AG04449 (cell line): ENCODE measurements at regions of chr19 and their contacts with region 1.

Region 1: DNA sequence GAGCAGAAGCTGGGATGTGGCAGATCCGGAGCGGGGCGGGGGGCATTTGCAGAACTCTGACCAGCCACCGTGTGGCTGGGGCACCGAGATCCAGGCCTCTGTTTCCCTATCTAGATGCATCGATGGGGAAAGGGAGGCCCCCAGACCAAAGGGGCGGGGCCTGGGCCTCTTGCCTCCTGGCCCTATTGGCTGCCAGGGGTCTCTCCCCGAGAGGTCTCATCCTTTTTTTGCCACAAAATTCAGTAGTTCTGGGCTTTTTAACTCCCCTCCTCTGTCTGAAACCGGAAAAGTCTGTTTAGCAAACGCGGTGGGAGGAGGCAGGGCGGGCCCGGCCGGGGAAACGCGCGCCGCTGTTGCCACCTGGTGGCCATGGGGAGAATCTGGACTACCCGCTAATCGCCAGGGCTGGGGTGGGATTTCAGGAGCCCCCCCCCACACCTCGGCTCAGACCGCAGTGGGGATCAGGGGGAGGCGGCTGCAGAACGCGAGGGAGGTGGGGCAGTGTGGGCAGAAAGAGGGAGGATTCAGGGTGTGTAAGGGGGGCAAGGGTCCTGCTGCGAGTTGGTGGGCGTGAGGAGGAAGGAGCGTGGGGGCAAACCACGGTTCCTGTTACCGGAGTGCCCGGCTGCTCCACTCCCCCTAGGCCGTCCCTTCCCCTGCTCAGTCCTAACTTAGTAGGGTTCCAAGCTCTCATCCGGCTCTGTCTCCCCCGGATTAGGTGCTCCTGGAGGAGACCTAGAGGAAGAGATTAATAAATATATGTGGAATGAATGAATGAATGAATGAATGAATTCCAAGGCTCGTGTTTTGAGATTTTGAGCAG is 28.3 kb downstream of the IL12RB1 start:
- DNase-seq: no peak
- H3K4me3 ChIP-seq: peak overlapping the region; percentile 30
- CTCF ChIP-seq: peak; percentile 93

Region 2: DNA sequence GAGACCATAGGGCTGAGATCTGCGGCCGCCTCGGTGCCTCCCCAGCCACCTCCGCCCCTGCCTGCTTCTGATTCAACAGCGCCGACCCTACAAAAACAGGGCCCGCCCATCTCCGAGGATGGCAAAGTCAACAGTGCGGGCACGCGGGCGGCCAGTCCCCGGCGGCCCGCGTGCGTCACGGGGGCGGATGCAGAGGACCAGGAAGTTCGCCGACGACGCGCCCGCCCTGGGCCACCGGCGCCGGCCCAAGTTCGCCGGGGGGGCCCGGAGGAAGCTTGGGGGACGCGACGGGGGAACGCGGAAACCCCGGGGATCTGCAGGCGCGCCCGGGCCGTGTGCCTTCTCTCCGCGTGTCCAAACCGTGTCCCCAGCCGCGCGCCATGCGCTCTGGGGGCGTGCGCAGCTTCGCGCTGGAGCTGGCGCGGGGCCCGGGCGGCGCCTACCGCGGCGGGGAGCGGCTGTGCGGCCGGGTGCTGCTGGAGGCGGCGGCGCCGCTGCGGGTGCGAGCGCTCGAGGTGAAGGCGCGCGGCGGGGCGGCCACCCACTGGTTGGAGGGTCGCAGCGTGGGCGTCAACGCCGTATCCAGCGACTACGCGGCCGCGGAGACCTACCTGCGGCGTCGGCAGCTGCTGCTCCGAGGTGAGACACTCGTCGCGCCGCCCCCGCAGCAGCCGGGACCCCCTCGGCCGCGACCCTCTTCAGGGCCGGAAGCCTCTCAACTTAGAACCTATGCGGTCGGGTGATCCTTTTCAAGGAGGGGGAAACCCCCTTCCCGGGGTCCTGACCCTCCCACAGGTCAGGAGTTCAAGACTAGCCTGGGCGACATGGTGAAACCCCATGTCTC is 57.3 kb before region 1 on chr19:
- CTCF ChIA-PET with region 1: interaction called, 229 read pairs
- POLR2A ChIA-PET with region 1: no interaction called
- DNase-seq: no peak
- H3K4me3 ChIP-seq: peak overlapping the region; percentile 69
- CTCF ChIP-seq: no peak

Region 3: GRCh38 chr19:18021121-18021755 is 37.2 kb before region 1 on chr19:
- CTCF ChIA-PET with region 1: interaction called, 17 read pairs
- POLR2A ChIA-PET with region 1: no interaction called
- DNase-seq: no peak
- H3K4me3 ChIP-seq: no peak overlapping the region
- CTCF ChIP-seq: no peak

Region 4: DNA sequence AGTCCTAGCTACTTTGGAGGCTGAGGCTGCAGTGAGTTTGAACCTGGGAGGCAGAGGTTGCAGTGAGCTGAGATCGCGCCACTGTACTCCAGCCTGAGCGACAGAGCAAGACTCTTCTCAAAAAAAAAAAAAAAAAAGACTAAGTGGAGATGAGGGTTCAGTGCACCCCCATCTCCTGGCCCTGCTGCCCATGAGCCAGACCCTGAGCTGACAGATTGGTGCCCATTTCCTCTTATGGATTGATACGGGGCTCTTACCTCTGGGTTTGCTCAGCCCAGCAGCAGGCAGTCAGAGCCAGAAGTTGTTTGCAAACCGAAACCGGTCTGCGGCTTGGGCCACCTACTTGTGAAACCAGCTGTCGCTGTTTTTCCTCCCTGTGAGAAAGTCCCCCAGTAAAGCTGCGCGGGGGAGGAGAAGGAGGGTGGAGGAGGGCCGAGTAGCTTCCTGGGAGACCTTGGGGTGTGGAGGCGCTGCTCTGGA is 13.6 kb before region 1 on chr19:
- CTCF ChIA-PET with region 1: interaction called, 12 read pairs
- POLR2A ChIA-PET with region 1: no interaction called
- DNase-seq: no peak
- H3K4me3 ChIP-seq: peak overlapping the region; percentile 49
- CTCF ChIP-seq: no peak